Transverse colon (tissue), 4 donors: ENCODE measurements at regions of chr4 and their contacts with region 1.

Region 1: GRCh38 chr4:138374947-138375346 is 132.8 kb upstream of the SLC7A11 start:
- DNase-seq: no peak
- H3K4me3 ChIP-seq: no peak overlapping the region
- H3K27ac ChIP-seq: no peak overlapping the region
- H3K4me1 ChIP-seq: no peaks in the 10 kb centered on the region
- H3K27me3 ChIP-seq: no peaks in the 10 kb centered on the region
- CTCF ChIP-seq: no peak
- EP300 ChIP-seq: no peak
- POLR2A ChIP-seq: no peak

Region 2: GRCh38 chr4:138393886-138394285 is 18.9 kb after region 1 on chr4:
- in situ Hi-C with region 1: no loop called
- intact Hi-C with region 1: loop called (anchors 2 kb)
- DNase-seq: no peak
- H3K4me3 ChIP-seq: no peak overlapping the region
- H3K27ac ChIP-seq: no peak overlapping the region
- H3K4me1 ChIP-seq: peaks cover 0 to 3% (median 0%) of the 10 kb centered on the region in 4 donors
- H3K27me3 ChIP-seq: no peaks in the 10 kb centered on the region
- CTCF ChIP-seq: no peak
- EP300 ChIP-seq: no peak
- POLR2A ChIP-seq: no peak